Activated naive CD4-positive, alpha-beta T cell treated with anti-CD3 and anti-CD28 coated beads for 36 hours (primary cell): ENCODE measurements at regions of chr9 and their contacts with region 1.

Region 1: GRCh38 chr9:21252721-21253547 is 13.1 kb upstream of the IFNA14 start:
- DNase-seq: peak; percentile 38
- H3K4me3 Mint-ChIP-seq: no peak overlapping the region
- H3K27ac Mint-ChIP-seq: no peak overlapping the region
- H3K4me1 Mint-ChIP-seq: peaks cover 4% of the 10 kb centered on the region
- H3K27me3 Mint-ChIP-seq: peaks cover 3% of the 10 kb centered on the region

Region 2: DNA sequence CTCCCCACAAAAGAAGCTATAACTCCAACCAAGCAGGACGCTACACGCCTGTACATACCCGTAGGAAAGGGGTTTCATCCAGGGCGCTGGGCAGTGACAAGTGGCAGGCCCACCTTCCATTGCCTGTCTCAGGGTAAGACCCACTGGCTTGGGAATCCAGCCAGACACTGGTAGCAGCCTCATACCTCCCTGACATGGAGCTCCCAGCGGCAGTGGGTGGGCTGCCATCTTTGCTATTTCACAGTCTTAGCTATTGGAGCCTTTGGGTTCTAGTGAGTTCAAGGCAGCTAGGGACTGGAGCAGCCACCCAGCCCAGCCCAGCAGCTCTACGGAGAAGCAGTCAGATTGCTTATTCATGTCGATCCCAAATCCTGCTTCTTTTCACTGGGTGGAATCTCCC is 42.6 kb before region 1 on chr9:
- CTCF ChIA-PET with region 1: interaction called, 10 read pairs
- intact Hi-C with region 1: no loop called
- DNase-seq: no peak
- H3K4me3 Mint-ChIP-seq: no peak overlapping the region
- H3K27ac Mint-ChIP-seq: no peak overlapping the region
- H3K4me1 Mint-ChIP-seq: peaks cover 7% of the 10 kb centered on the region
- H3K27me3 Mint-ChIP-seq: peaks cover 5% of the 10 kb centered on the region

Region 3: GRCh38 chr9:21281275-21281674 is 28.3 kb after region 1 on chr9:
- CTCF ChIA-PET with region 1: no interaction called
- intact Hi-C with region 1: no loop called
- DNase-seq: no peak
- H3K4me3 Mint-ChIP-seq: no peak overlapping the region
- H3K27ac Mint-ChIP-seq: no peak overlapping the region
- H3K4me1 Mint-ChIP-seq: no peaks in the 10 kb centered on the region
- H3K27me3 Mint-ChIP-seq: peaks cover 22% of the 10 kb centered on the region

Region 4: GRCh38 chr9:21506626-21507484 is 253.9 kb after region 1 on chr9:
- CTCF ChIA-PET with region 1: no interaction called
- intact Hi-C with region 1: no loop called
- DNase-seq: no peak
- H3K4me3 Mint-ChIP-seq: no peak overlapping the region
- H3K27ac Mint-ChIP-seq: no peak overlapping the region
- H3K4me1 Mint-ChIP-seq: peaks cover 12% of the 10 kb centered on the region
- H3K27me3 Mint-ChIP-seq: no peaks in the 10 kb centered on the region